ENCODE measurements at regions of chr9 and their contacts with region 1.

Region 1: DNA sequence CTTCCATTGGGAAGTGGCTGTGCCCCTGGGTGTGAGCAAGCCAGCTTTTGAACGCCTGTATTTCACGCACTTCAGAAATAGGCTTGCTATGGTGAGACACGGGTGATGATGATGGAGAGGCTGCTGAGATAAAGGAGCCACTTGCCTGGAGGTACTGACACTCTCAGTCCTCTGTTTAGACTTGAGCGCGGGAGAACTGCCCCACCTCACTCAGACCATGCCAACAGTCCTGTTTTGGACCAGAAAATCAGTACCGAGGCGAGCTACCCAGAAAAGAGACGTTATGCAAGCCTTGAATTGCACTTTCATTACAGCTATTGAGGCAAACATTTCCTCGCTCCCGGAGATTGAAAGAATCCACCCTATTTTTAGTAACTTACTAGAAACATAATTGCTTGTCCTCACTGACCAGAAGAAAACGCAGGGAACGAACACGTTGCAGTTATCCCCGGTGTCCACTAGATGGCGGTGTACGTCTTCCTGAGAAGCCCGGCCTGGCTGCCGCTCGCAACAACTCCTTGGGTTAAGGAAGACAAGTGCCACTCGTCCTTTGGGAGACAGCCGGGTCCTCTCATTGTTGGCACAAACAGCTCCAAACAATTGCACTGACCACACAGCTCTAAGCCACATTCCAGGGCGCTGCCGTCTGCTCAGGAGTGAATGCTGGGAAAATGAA is 142.4 kb downstream of the PSAT1 start:
- DNase-seq: peak; percentile 71 to 84
- ATAC-seq: peak; percentile 83 to 95 (median 91)
- H3K4me3 ChIP-seq: no peak overlapping the region
- H3K27ac ChIP-seq: no peak overlapping the region
- H3K4me1 ChIP-seq: no peaks in the 10 kb centered on the region
- H3K27me3 ChIP-seq: peaks cover 0 to 3% (median 0%) of the 10 kb centered on the region in 3 donors
- CTCF ChIP-seq: peak; percentile 93

Region 2: GRCh38 chr9:78605041-78606000 is 166.0 kb after region 1 on chr9:
- intact Hi-C with region 1: loop called in 1 of 2 experiments (anchors 5 kb)
- DNase-seq: no peak
- ATAC-seq: no peak
- H3K4me3 ChIP-seq: no peak overlapping the region
- H3K27ac ChIP-seq: no peak overlapping the region
- H3K4me1 ChIP-seq: no peaks in the 10 kb centered on the region
- H3K27me3 ChIP-seq: no peaks in the 10 kb centered on the region
- CTCF ChIP-seq: no peak

Region 3: GRCh38 chr9:79242489-79242888 is 803.2 kb after region 1 on chr9:
- intact Hi-C with region 1: loop called in 1 of 2 experiments (anchors 10 kb)
- DNase-seq: no peak
- ATAC-seq: no peak
- H3K4me3 ChIP-seq: no peak overlapping the region
- H3K27ac ChIP-seq: no peak overlapping the region
- H3K4me1 ChIP-seq: no peaks in the 10 kb centered on the region
- H3K27me3 ChIP-seq: no peaks in the 10 kb centered on the region
- CTCF ChIP-seq: no peak

Measured in psoas muscle (tissue), 8 donors.